ENCODE measurements at regions of chr5 and their contacts with region 1.

Region 1: GRCh38 chr5:133930061-133930812 is 38.2 kb downstream of the C5orf15 start:
- DNase-seq: peak; percentile 89
- ATAC-seq: peak; percentile 84
- H3K4me3 Mint-ChIP-seq: peak overlapping the region; percentile 74
- H3K27ac Mint-ChIP-seq: peak overlapping the region; percentile 99
- H3K4me1 Mint-ChIP-seq: peaks cover 61% of the 10 kb centered on the region
- H3K27me3 Mint-ChIP-seq: no peaks in the 10 kb centered on the region

Region 2: DNA sequence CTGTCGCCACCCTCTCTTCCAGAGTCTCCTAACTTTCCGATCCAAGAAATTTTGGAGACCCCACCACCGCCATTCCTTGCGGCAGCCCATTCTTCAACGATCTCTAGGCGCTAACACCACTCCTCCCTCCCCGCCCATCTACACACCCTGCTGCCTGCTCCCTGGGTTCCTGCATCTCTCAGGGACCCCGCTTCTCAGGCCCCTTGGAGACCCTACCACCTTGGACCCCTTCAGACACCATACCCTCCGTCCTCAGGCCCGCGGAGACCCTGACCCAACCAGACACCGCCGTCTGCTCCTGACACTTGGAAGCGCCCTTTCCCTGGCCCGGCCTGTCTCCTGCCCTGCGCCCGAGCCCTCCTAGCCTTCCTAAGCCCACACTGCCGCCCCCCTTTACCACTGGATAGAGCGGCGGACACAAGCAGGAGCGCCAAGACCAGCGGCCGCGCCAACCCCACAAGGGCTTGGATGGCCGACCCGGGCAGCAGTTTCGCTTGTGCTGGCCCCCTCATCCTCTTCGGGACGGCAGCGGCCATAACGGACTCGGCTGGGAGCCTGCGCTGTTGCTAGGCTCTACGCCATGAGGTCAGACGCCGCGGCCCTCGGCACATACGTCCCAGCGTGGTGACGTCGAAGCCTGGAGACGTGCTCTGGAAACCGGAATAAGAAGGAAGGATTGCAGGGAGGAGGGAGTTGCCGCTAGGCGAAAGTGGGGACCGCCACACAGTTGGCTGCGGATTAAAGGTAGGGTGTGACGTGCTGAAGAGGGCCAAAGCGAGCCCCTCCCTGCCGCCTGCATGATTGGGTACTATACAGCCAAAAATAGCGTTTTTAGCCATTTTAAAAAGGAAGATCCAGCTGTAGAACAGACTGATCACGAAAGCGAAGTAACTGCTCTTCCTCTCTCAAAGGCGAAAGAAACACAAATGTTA is 38.1 kb after region 1 on chr5 and contains the start of gene C5orf15:
- CTCF ChIA-PET with region 1: interaction called, 4 read pairs
- POLR2A ChIA-PET with region 1: no interaction called
- intact Hi-C with region 1: loop called in 1 of 2 experiments (anchors 1 kb)
- DNase-seq: peak; percentile 97
- ATAC-seq: peak; percentile 97
- H3K4me3 Mint-ChIP-seq: peak within 1 kb of the TSS; percentile 94
- H3K27ac Mint-ChIP-seq: peak within 1 kb of the TSS; percentile 90
- H3K4me1 Mint-ChIP-seq: peaks cover 51% of the 10 kb centered on the region
- H3K27me3 Mint-ChIP-seq: no peaks in the 10 kb centered on the region
- total RNA-seq, gene C5orf15: 28.7 to 38.7 TPM

Region 3: GRCh38 chr5:134070725-134071613 is 140.7 kb after region 1 on chr5:
- CTCF ChIA-PET with region 1: no interaction called
- POLR2A ChIA-PET with region 1: no interaction called
- intact Hi-C with region 1: loop called in 1 of 2 experiments (anchors 1 kb)
- DNase-seq: peak; percentile 77
- ATAC-seq: peak; percentile 1
- H3K4me3 Mint-ChIP-seq: peak overlapping the region; percentile 73
- H3K27ac Mint-ChIP-seq: peak overlapping the region; percentile 89
- H3K4me1 Mint-ChIP-seq: peaks cover 68% of the 10 kb centered on the region
- H3K27me3 Mint-ChIP-seq: no peaks in the 10 kb centered on the region

Measured in activated CD4-positive, alpha-beta T cell treated with anti-CD3 and anti-CD28 coated beads for 36 hours (primary cell).